Activated CD8-positive, alpha-beta memory T cell treated with anti-CD3 and anti-CD28 coated beads, Interleukin-2, amount 10 ng/mL, durations not matched to agents 7 days and 5 days (primary cell): ENCODE measurements at regions of chr7 and their contacts with region 1.

Region 1: DNA sequence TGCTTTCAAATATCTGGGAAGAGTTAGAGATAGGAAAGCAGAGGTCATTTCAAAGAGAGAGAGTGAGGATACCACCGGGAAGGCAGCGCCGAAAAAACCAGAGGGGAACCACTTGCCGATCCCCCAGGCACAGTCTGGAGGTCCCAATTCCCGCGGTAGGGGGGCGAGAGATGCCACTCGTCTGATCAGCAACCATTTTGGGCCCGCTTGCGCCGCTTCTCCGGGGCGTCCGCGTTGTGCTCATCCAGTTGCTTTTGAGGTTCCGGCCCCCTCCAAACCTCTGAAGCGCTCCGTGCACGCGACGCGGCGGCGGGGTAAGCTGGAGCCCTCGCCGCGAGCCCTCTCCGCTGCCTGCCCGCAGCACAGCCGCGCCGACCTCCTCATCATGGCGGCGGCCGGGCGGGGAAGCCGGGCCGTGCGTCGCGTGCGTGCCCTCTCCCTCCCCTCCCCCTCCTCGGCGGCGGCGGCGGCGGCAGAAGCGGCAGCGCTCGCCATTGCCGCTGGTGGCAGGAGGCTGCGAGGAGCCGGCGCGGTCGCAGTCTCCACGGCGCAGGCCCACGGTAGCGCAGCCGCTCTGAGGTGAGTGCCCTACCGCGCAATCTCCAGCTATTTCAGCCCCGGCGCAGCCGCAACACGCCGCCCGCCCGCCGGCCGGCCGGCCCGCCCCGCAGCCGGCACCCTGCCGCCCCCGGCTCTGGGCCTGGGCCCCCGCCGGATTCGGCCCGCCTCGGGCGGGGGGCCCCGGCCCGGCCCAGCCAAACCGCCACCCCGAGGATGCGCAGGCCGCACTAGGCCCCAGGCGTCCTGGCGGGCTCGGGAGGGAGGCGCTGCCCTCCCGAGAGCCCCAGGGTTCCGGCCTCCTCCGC is at the start of gene NRF1:
- DNase-seq: peak; percentile 92
- ATAC-seq: peak; percentile 88
- H3K4me3 Mint-ChIP-seq: peak within 1 kb of the TSS; percentile 94
- H3K27ac Mint-ChIP-seq: peak within 1 kb of the TSS; percentile 92
- H3K4me1 Mint-ChIP-seq: peaks cover 56% of the 10 kb centered on the region
- H3K27me3 Mint-ChIP-seq: no peaks in the 10 kb centered on the region
- total RNA-seq, gene NRF1: 26.4 to 29.5 TPM

Region 2: DNA sequence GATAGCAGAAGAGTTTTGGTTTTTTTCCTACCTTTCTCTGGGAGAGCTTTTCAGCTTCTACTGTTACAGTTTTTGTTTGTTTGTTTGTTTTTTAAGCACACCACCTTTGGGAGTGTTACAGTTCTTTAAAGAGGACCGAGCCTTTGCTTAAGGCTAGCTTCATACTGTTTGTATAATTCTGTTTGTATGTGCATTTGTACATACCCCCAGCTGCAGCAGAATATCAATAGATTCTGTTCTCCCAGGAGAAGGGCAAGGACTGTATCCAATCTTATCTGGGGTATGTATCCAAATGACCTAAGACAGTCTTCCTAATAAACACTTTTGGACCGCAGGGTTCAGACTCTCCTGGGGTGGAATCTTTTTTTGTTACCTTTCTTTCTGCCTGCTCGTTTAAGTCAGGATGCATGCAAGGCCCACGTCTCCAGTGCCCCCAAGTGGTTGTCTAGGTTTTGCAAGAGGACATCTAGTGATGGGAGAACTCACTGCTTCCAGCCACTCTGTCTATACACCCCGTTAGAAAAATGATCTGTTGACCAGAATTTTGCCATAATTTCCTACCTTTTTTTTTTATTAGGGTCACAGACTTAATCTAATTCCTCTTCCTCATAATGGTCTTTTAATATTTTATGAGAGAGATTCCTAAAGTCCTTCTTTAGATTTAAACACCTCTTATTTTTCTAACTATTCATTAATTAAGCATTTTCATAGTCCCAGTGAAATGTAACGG is 24.0 kb after region 1 on chr7:
- CTCF ChIA-PET with region 1: interaction called, 11 read pairs
- DNase-seq: peak; percentile 79
- ATAC-seq: peak; percentile 96
- H3K4me3 Mint-ChIP-seq: no peak overlapping the region
- H3K27ac Mint-ChIP-seq: no peak overlapping the region
- H3K4me1 Mint-ChIP-seq: peaks cover 22% of the 10 kb centered on the region
- H3K27me3 Mint-ChIP-seq: no peaks in the 10 kb centered on the region